ENCODE measurements at regions of chr9 and their contacts with region 1.

Region 1: DNA sequence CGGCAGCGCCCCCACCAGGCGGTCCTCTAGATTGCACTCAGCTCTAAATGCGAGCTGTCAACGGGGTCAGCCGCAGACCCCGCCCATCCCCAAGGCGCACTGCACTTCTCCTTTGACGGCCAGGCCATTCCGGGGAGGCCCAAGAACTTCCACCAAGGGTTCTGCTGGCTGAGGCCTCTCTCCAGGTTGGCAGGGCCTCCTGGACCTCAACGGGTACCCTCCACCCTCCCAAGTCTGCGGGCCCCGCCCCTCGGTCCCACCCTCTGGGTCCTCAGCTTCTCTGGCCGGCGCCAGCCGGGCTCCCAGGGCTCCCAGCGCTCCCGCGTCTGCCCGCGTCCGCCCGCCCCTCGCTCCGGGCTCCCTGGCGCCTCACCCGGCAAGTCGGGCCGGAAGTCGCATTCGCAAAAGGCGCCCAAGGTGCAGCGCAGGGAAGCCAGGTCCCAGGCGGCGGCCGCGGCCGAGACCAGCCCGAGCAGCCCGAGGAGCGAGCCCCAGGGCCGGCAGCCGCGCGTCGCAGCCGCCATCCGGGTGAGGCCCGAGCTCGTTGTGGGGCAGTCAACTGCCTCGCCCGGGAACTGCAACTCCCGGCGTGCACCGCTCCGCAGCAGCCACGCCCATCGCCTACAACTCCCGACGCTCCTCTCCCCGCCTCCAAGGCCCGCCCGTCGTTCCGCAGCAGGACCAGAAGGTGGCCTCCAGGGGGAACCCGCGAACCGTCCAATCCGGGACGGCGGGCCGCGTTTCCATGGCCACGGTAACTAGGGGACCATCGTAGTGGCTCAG is at the start of gene TOR2A:
- DNase-seq: peak; percentile 97 to 99 (median 98)
- H3K4me3 ChIP-seq: peak within 1 kb of the TSS; percentile 46 to 76 (median 54)
- H3K4me3 Mint-ChIP-seq: peak within 1 kb of the TSS; percentile 75 to 81
- H3K27ac ChIP-seq: peak within 1 kb of the TSS; percentile 76 to 90
- H3K27ac Mint-ChIP-seq: peak within 1 kb of the TSS; percentile 90 to 95 (median 93)
- H3K4me1 ChIP-seq: peaks cover 19 to 25% of the 10 kb centered on the region in 2 donors
- H3K4me1 Mint-ChIP-seq: peaks cover 17% of the 10 kb centered on the region
- H3K27me3 ChIP-seq: no peaks in the 10 kb centered on the region
- H3K27me3 Mint-ChIP-seq: peaks cover 0 to 3% (median 0%) of the 10 kb centered on the region in 3 donors
- CTCF ChIP-seq: peak; percentile 82
- polyA plus RNA-seq, gene TOR2A: 57.4 to 63.8 (median 60.0) TPM

Region 2: DNA sequence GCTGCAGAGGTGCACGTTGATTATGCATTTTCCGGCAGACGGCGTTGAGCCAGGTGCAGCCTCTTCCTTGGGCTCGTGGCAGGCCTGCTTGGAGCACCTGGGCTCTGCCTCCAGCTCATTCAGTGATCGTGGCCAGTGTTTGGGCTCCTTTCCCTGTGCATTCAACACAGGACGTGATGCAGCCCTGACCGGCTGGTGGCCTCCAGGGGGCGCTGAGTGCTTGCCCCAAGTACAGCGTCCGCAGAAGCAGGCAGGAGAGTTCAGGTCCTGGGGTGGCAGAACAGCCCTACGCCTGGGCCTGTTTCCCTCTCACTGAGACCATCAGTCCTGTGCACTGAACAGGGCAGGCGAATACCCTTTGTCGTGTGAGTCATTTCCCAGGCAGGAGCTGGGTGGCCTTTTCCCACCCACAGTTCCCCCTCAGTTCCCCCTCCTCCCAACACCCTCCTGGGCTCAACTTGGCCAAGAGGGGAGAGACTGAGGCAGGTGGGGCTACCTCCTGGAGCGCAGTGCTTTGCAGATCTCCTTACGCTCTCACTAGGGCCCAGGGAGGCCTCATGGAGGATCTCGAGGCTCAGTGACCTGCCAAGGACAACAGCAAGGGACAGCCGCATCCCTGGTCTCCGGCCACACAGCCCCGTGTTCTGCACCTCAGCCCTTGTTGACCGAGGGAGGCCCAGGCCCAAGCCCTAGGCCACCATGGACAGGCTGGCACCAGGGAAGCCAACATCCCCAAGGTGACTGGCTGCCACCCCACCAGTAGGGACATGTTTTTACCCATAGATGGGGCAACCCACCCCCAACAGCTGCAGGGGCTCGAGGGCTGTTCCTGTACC is 230.8 kb before region 1 on chr9:
- intact Hi-C with region 1: loop called (anchors 1 to 2 kb)
- DNase-seq: peak; percentile 73 to 80 (median 79)
- H3K4me3 ChIP-seq: no peak overlapping the region
- H3K4me3 Mint-ChIP-seq: no peak overlapping the region
- H3K27ac ChIP-seq: peak overlapping the region; percentile 2 to 50
- H3K27ac Mint-ChIP-seq: peak overlapping the region in 5 of 7 donors; percentile 5 to 48 (median 46)
- H3K4me1 ChIP-seq: no peaks in the 10 kb centered on the region
- H3K4me1 Mint-ChIP-seq: no peaks in the 10 kb centered on the region
- H3K27me3 ChIP-seq: no peaks in the 10 kb centered on the region
- H3K27me3 Mint-ChIP-seq: peaks cover 0 to 4% (median 2%) of the 10 kb centered on the region in 3 donors
- CTCF ChIP-seq: peak; percentile 90

Region 3: DNA sequence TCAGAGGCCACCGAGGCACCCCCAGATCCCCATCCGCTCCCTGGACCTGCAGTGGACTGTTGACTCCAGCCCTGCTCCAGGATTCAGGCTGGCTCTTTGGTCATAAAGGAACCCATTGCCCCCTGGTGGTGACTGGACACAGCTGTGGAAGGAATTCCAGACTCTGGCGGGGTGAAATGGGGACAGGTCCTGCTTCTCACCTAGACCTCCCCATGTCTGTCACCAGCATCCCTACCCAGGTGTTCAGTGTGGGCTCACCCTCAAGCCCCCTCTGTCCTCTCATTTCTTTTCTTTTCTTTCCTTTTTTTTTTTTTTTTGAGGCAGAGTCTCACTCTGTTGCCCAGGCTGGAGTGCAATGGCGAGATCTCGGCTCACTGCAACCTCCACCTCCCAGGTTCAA is 148.4 kb before region 1 on chr9:
- intact Hi-C with region 1: loop called in 1 of 2 experiments (anchors 5 kb)
- DNase-seq: peak; percentile 67 to 85 (median 81)
- H3K4me3 ChIP-seq: no peak overlapping the region
- H3K4me3 Mint-ChIP-seq: peak overlapping the region in 1 of 2 donors; percentile 56
- H3K27ac ChIP-seq: peak overlapping the region in 1 of 2 donors; percentile 72
- H3K27ac Mint-ChIP-seq: peak overlapping the region in 4 of 7 donors; percentile 76 to 91 (median 85)
- H3K4me1 ChIP-seq: peaks cover 44 to 45% of the 10 kb centered on the region in 2 donors
- H3K4me1 Mint-ChIP-seq: peaks cover 41% of the 10 kb centered on the region
- H3K27me3 ChIP-seq: no peaks in the 10 kb centered on the region
- H3K27me3 Mint-ChIP-seq: peaks cover 4 to 15% (median 8%) of the 10 kb centered on the region in 3 donors
- CTCF ChIP-seq: peak; percentile 83

Region 4: DNA sequence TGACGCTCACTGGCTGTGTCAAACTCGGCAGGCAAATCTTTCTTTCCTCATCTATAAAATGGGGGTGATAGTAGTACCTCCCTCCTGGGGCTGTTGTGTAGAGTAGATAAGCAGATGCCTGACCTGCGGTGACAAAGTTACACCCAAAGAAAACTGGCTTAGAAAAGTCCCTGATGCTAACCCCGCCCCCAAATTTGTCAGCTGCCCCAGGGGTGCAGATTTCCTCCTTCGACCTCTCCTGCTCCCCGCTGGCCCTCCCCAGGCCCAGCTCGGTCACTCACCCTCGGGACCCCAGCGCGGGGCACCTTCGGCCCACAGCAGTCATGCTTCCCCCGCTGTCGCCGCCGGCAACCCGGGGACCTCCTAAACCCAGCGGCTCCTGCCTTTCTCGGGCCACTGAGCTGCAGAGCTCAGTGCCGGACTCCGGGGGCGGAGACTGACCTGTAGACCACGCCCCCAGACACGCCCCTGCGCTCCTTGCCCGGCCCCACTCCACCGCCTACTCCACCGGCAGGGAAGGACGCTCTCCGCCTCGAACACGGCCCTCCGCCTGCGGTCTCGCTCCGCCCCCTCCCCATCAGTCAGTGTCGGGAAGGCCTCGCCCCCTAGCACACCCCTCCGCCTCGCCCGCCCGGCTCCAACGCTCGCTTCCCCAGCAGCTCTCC is 36.1 kb after region 1 on chr9:
- intact Hi-C with region 1: loop called in 1 of 2 experiments (anchors 2 kb)
- DNase-seq: peak; percentile 94 to 98 (median 98)
- H3K4me3 ChIP-seq: peak overlapping the region; percentile 29 to 80 (median 60)
- H3K4me3 Mint-ChIP-seq: peak overlapping the region; percentile 88 to 91
- H3K27ac ChIP-seq: peak overlapping the region; percentile 51 to 80
- H3K27ac Mint-ChIP-seq: peak overlapping the region; percentile 86 to 94 (median 89)
- H3K4me1 ChIP-seq: peaks cover 68 to 91% of the 10 kb centered on the region in 2 donors
- H3K4me1 Mint-ChIP-seq: peaks cover 83% of the 10 kb centered on the region
- H3K27me3 ChIP-seq: no peaks in the 10 kb centered on the region
- H3K27me3 Mint-ChIP-seq: peaks cover 0 to 3% (median 0%) of the 10 kb centered on the region in 3 donors
- CTCF ChIP-seq: no peak

Region 5: GRCh38 chr9:127785023-127785932 is 50.3 kb after region 1 on chr9:
- intact Hi-C with region 1: loop called (anchors 1 to 2 kb)
- DNase-seq: peak; percentile 75 to 86 (median 83)
- H3K4me3 ChIP-seq: peak overlapping the region; percentile 40 to 98 (median 96)
- H3K4me3 Mint-ChIP-seq: peak overlapping the region; percentile 53 to 70
- H3K27ac ChIP-seq: peak overlapping the region; percentile 96 to 97
- H3K27ac Mint-ChIP-seq: peak overlapping the region; percentile 93 to 99 (median 98)
- H3K4me1 ChIP-seq: peaks cover 58 to 64% of the 10 kb centered on the region in 2 donors
- H3K4me1 Mint-ChIP-seq: peaks cover 61% of the 10 kb centered on the region
- H3K27me3 ChIP-seq: no peaks in the 10 kb centered on the region
- H3K27me3 Mint-ChIP-seq: peaks cover 0 to 9% (median 0%) of the 10 kb centered on the region in 3 donors
- CTCF ChIP-seq: peak; percentile 91

Region 6: GRCh38 chr9:127869310-127870152 is 134.6 kb after region 1 on chr9:
- intact Hi-C with region 1: loop called in 1 of 2 experiments (anchors 5 kb)
- DNase-seq: peak; percentile 81 to 88 (median 86)
- H3K4me3 ChIP-seq: no peak overlapping the region
- H3K4me3 Mint-ChIP-seq: peak overlapping the region in 1 of 2 donors; percentile 11
- H3K27ac ChIP-seq: no peak overlapping the region
- H3K27ac Mint-ChIP-seq: peak overlapping the region in 4 of 7 donors; percentile 32 to 66 (median 61)
- H3K4me1 ChIP-seq: peaks cover 16 to 22% of the 10 kb centered on the region in 2 donors
- H3K4me1 Mint-ChIP-seq: peaks cover 21% of the 10 kb centered on the region
- H3K27me3 ChIP-seq: no peaks in the 10 kb centered on the region
- H3K27me3 Mint-ChIP-seq: peaks cover 0 to 2% (median 2%) of the 10 kb centered on the region in 3 donors
- CTCF ChIP-seq: peak; percentile 96